Left ventricle myocardium inferior (tissue), 1 donor: ENCODE measurements at regions of chr11 and their contacts with region 1.

Region 1: GRCh38 chr11:74449369-74449931 is 17.9 kb downstream of the KCNE3 start:
- DNase-seq: no peak
- H3K4me3 ChIP-seq: no peak overlapping the region
- H3K27ac ChIP-seq: no peak overlapping the region
- H3K4me1 ChIP-seq: peaks cover 1% of the 10 kb centered on the region
- H3K27me3 ChIP-seq: peaks cover 13% of the 10 kb centered on the region
- CTCF ChIP-seq: peak; percentile 80

Region 2: DNA sequence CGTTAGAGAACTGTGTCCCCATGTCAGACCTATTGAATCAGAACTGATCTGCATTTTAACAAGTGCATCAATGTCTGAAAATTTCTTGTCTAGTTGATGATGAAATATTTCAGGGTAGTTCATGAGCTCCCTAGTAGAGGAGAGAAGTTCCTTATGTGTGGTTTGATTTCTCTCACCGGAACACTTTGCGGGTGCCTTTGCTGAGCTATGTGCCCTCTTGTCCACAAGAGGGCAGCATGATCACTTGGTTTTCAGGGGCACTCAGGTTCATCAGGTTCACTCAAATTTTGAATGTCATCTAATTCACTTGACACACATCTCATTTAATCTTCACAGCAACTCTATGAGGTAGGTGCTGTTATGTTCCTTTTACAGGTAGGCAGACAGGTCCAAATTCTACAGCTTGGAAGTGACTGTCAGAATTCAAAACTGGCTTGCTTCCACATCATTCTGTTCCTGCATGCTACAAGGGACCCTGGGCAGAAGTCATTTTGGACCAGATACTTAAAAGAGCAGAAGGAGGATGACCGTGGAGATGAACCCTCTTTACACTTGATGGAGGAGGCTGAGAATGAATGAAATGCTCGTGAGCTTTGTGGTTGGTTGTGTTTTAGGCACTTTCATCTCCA is 193.6 kb before region 1 on chr11:
- intact Hi-C with region 1: loop called (anchors 5 kb)
- DNase-seq: no peak
- H3K4me3 ChIP-seq: no peak overlapping the region
- H3K27ac ChIP-seq: no peak overlapping the region
- H3K4me1 ChIP-seq: no peaks in the 10 kb centered on the region
- H3K27me3 ChIP-seq: no peaks in the 10 kb centered on the region
- CTCF ChIP-seq: peak; percentile 93

Region 3: DNA sequence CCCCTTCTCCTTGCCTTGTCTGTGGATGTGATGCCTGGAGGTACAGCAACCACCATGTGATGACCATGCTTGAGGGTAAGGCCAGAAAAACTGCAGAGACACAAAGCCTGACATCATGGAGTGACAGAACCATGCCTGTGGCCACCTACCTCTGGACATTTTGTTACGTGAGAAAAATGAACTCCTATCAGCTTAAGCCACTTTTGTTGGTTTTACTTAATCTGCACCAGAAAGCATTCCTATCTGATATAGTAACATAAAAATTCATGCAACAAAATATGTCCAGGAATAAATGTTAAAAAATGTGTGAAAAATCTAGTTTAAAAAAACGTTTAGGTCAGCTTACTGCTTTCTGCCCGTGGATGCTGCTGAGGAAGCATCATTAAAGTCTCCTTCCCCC is 95.4 kb before region 1 on chr11:
- intact Hi-C with region 1: no loop called
- DNase-seq: no peak
- H3K4me3 ChIP-seq: no peak overlapping the region
- H3K27ac ChIP-seq: no peak overlapping the region
- H3K4me1 ChIP-seq: no peaks in the 10 kb centered on the region
- H3K27me3 ChIP-seq: no peaks in the 10 kb centered on the region
- CTCF ChIP-seq: no peak

Region 4: GRCh38 chr11:74388678-74389327 is 60.6 kb before region 1 on chr11:
- intact Hi-C with region 1: loop called (anchors 2 kb)
- DNase-seq: no peak
- H3K4me3 ChIP-seq: no peak overlapping the region
- H3K27ac ChIP-seq: no peak overlapping the region
- H3K4me1 ChIP-seq: no peaks in the 10 kb centered on the region
- H3K27me3 ChIP-seq: no peaks in the 10 kb centered on the region
- CTCF ChIP-seq: peak; percentile 81

Region 5: DNA sequence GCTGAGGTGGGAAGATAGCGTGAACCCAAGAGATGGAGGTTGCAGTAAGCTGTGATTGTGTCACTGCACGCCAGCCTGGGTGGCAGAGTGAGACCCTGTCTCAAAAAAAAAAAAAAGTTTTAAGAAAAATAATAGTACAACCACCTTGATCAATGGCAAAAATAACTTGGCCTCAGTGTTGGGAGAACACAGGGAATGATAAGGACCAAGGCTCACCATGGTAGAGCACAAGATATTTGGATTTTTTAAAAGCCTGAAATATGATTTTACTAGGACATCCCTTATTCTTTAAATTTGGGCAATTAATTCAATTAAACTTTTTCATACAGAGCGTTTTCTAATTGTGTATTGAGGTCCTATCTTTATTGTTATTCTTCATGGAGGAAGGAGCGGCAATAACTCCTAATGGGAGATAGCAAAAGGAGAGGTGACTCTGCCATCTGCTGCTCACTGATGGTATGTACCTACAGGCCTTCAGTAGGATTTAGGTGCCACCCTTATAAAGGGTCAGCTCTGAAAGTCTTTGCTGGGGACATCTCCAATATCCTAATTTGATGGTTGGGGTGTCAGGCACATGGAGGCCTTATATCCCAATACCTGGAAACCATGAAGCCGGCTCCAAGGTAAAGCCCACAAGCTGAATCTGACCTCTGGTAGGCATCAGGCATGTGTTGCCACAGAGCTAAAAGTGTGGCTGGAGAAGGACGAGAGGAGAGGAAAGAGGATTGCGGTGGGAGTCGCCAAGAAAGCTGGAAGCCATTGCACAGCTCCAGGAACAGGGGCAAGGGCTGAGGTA is 121.0 kb after region 1 on chr11:
- intact Hi-C with region 1: loop called (anchors 5 kb)
- DNase-seq: no peak
- H3K4me3 ChIP-seq: no peak overlapping the region
- H3K27ac ChIP-seq: no peak overlapping the region
- H3K4me1 ChIP-seq: no peaks in the 10 kb centered on the region
- H3K27me3 ChIP-seq: no peaks in the 10 kb centered on the region
- CTCF ChIP-seq: peak; percentile 80

Region 6: GRCh38 chr11:74806267-74806666 is 356.8 kb after region 1 on chr11:
- intact Hi-C with region 1: no loop called
- DNase-seq: no peak
- H3K4me3 ChIP-seq: no peak overlapping the region
- H3K27ac ChIP-seq: peak overlapping the region; percentile 34
- H3K4me1 ChIP-seq: peaks cover 59% of the 10 kb centered on the region
- H3K27me3 ChIP-seq: no peaks in the 10 kb centered on the region
- CTCF ChIP-seq: no peak